Activated naive CD4-positive, alpha-beta T cell treated with anti-CD3 and anti-CD28 coated beads for 36 hours (primary cell): ENCODE measurements at regions of chr1 and their contacts with region 1.

Region 1: DNA sequence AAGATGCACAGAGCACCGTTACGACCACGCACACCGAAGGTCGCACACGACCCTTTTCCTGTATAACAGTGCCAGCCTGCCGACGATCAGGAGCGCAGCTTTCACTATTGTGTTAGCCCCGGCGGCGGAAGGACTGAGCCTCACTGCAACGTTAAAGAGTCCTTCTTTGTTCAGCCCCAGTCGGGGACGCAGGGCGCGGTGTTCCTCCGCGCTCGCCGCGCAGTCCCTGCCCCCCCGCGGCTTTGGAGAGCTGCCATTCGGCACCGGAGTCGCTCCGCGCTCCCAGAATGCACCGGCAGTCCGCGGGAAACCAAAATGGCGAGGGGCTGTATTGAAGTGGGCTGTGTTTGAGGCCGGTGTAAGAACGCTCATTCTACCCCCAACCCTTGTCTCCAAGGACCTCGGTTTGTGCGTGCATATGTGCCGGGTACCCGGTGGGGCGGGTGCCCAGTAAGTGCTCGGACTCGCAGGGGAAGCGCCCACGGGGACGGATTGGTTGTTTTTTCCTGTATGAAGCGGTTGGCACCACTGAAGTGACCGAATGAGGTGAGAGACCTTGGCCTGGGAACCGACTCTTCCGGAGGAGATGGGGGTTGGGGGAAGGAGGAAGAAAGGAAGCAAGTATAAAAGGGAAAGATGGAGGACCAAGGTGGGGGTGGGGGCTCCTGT is at the start of gene MTF2:
- DNase-seq: peak; percentile 96
- H3K4me3 Mint-ChIP-seq: peak within 1 kb of the TSS; percentile 94
- H3K27ac Mint-ChIP-seq: peak within 1 kb of the TSS; percentile 94
- H3K4me1 Mint-ChIP-seq: peaks cover 29% of the 10 kb centered on the region
- H3K27me3 Mint-ChIP-seq: no peaks in the 10 kb centered on the region
- total RNA-seq, gene MTF2: 51.0 to 56.6 TPM

Region 2: DNA sequence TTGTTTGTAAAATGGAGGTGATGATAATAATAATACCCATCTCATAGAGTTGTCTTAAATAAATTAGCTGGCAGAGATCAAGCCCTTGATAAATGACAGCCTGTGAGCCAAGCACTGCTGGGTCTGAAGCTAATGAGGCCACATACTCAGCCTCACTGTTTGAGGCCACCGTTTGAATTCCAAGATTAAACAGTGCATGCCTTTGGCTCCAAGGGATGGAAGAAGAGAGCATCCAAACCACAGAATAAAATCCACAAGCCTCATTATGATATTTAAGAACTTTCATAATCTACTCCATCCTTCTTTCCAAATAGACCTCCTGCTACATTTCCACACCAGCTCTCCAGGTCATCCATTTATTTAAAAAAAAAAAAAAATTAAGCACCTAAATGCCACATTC is 1222.1 kb before region 1 on chr1:
- CTCF ChIA-PET with region 1: no interaction called
- intact Hi-C with region 1: no loop called
- DNase-seq: no peak
- H3K4me3 Mint-ChIP-seq: no peak overlapping the region
- H3K27ac Mint-ChIP-seq: no peak overlapping the region
- H3K4me1 Mint-ChIP-seq: no peaks in the 10 kb centered on the region
- H3K27me3 Mint-ChIP-seq: no peaks in the 10 kb centered on the region

Region 3: DNA sequence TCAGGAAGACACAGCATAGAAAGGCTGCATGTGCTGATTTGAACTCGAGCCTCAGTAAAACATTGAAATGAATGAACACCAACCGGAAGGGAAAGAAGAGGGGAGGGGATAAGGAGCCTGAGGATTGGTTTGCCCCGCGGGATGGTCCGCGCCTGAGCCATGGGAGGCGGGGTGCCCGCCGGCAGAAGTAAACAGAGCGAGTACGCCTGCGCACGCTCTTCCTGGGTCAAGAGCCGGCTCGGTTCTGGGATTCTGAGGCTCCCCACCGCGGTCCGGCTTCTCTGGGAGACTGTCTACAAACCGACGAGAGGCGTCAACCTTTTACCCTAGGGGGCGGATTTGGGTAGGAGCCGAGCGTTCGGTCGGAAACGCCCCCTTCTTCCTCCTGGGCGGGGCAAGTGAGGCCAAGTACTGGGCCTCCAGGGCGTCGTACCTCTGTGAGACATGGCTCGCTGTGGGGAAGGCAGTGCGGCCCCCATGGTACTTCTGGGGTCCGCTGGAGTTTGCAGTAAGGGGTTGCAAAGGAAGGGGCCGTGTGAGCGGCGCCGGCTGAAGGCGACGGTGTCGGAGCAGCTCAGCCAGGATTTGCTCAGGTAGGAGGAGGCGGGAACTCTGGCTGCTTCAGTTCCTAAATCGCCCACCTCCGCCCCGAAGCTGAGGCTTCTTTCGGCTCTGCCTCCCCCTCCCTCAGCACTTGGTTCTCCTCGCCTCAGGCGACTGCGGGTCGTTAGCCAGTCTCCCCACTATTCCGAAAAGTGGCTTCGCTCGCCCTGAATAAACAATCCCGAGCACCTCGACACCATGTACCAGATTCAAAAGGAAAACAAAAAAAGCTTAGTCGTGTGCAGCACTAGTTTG is 998.8 kb before region 1 on chr1 and contains the start of gene BTBD8:
- CTCF ChIA-PET with region 1: no interaction called
- intact Hi-C with region 1: loop called (anchors 1 kb)
- DNase-seq: peak; percentile 90
- H3K4me3 Mint-ChIP-seq: peak within 1 kb of the TSS; percentile 93
- H3K27ac Mint-ChIP-seq: peak within 1 kb of the TSS; percentile 80
- H3K4me1 Mint-ChIP-seq: peaks cover 9% of the 10 kb centered on the region
- H3K27me3 Mint-ChIP-seq: no peaks in the 10 kb centered on the region
- total RNA-seq, gene BTBD8: 2.0 to 2.7 TPM

Region 4: GRCh38 chr1:92960395-92961130 is 118.6 kb before region 1 on chr1:
- CTCF ChIA-PET with region 1: interaction called, 5 read pairs
- intact Hi-C with region 1: loop called (anchors 1 kb)
- DNase-seq: peak; percentile 76
- H3K4me3 Mint-ChIP-seq: peak overlapping the region; percentile 89
- H3K27ac Mint-ChIP-seq: peak overlapping the region; percentile 94
- H3K4me1 Mint-ChIP-seq: peaks cover 41% of the 10 kb centered on the region
- H3K27me3 Mint-ChIP-seq: no peaks in the 10 kb centered on the region

Region 5: DNA sequence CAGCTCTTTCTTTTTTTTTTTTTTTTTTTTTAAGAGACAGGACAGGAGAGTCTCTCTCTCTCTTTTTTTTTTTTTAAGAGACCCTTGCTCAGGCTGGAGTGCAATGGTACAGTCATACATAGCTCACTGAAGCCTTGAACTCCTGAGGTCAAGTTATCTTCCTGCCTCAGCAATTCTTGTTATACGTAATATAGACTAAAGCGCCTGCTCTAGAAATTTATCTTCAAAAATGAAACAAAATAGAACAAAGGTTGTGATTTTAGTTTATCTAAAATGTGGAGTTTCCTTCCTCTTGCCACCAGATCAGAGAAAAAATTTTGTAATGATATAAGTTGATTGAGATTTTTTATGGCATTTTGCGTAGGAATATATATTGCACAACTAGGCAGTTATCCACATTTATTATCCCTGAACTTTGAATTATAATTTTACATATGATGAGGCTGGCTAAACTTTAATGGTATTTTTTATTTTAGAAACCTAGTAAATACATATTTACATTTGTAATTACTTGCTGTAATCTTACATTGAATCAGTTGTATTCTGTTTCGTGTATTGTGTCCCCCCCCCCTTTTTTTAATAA is 44.2 kb after region 1 on chr1:
- CTCF ChIA-PET with region 1: interaction called, 3 read pairs
- intact Hi-C with region 1: loop called (anchors 2 kb)
- DNase-seq: no peak
- H3K4me3 Mint-ChIP-seq: no peak overlapping the region
- H3K27ac Mint-ChIP-seq: no peak overlapping the region
- H3K4me1 Mint-ChIP-seq: peaks cover 6% of the 10 kb centered on the region
- H3K27me3 Mint-ChIP-seq: no peaks in the 10 kb centered on the region

Region 6: GRCh38 chr1:93219443-93219842 is 140.3 kb after region 1 on chr1:
- CTCF ChIA-PET with region 1: no interaction called
- intact Hi-C with region 1: loop called (anchors 1 kb)
- DNase-seq: peak; percentile 40
- H3K4me3 Mint-ChIP-seq: peak overlapping the region; percentile 51
- H3K27ac Mint-ChIP-seq: peak overlapping the region; percentile 54
- H3K4me1 Mint-ChIP-seq: peaks cover 21% of the 10 kb centered on the region
- H3K27me3 Mint-ChIP-seq: no peaks in the 10 kb centered on the region

Region 7: GRCh38 chr1:93437976-93438605 is 359.0 kb after region 1 on chr1:
- CTCF ChIA-PET with region 1: no interaction called
- intact Hi-C with region 1: loop called (anchors 5 kb)
- DNase-seq: no peak
- H3K4me3 Mint-ChIP-seq: no peak overlapping the region
- H3K27ac Mint-ChIP-seq: no peak overlapping the region
- H3K4me1 Mint-ChIP-seq: no peaks in the 10 kb centered on the region
- H3K27me3 Mint-ChIP-seq: peaks cover 4% of the 10 kb centered on the region

Region 8: GRCh38 chr1:93814059-93814794 is 735.1 kb after region 1 on chr1:
- CTCF ChIA-PET with region 1: no interaction called
- intact Hi-C with region 1: loop called (anchors 1 kb)
- DNase-seq: peak; percentile 74
- H3K4me3 Mint-ChIP-seq: no peak overlapping the region
- H3K27ac Mint-ChIP-seq: no peak overlapping the region
- H3K4me1 Mint-ChIP-seq: peaks cover 19% of the 10 kb centered on the region
- H3K27me3 Mint-ChIP-seq: no peaks in the 10 kb centered on the region